K562 (cell line): ENCODE measurements at regions of chr15 and their contacts with region 1.

Region 1: GRCh38 chr15:71730277-71731144 is 79.8 kb upstream of the NR2E3 start:
- DNase-seq: peak; percentile 55 to 63 (median 60)
- ATAC-seq: peak; percentile 96
- H3K4me3 ChIP-seq: no peak overlapping the region
- H3K27ac ChIP-seq: no peak overlapping the region
- H3K4me1 ChIP-seq: no peaks in the 10 kb centered on the region
- H3K27me3 ChIP-seq: no peaks in the 10 kb centered on the region
- CTCF ChIP-seq: peak; percentile 62 to 78 (median 78)
- EP300 ChIP-seq: no peak
- POLR2A ChIP-seq: no peak
- RAD21 ChIP-seq: peak; percentile 59 to 63

Region 2: GRCh38 chr15:70974004-70974832 is 756.3 kb before region 1 on chr15:
- CTCF ChIA-PET with region 1: no interaction called
- POLR2A ChIA-PET with region 1: no interaction called
- in situ Hi-C with region 1: loop called (anchors 25 kb)
- intact Hi-C with region 1: no loop called
- DNase-seq: peak in 1 of 4 experiments; percentile 14
- ATAC-seq: no peak
- H3K4me3 ChIP-seq: no peak overlapping the region
- H3K27ac ChIP-seq: no peak overlapping the region
- H3K4me1 ChIP-seq: no peaks in the 10 kb centered on the region
- H3K27me3 ChIP-seq: no peaks in the 10 kb centered on the region
- CTCF ChIP-seq: peak in 1 of 3 experiments; percentile 36; a peak in 2 of 6 replicates
- EP300 ChIP-seq: no peak
- POLR2A ChIP-seq: no peak
- RAD21 ChIP-seq: peak; percentile 26 to 50; a peak in 3 of 4 replicates

Region 3: DNA sequence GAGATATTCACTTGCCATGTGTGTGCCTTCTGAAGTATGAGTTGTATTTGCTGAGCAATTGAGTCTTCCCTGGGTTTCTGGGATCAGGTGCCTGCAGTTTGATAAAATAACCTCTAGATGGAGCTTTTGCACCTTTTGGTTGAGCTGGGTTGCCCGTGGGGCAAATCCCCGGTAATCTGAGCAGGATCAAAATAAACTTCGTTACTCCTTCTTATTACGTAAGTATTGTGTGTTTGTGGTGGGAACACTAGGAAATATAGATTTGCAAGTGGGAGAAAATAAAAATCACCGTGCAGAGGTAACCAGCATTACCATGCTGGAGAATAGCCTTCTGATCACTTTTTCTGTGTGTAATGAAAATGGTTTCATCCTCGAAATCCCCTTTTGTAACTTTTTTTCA is 197.5 kb before region 1 on chr15:
- CTCF ChIA-PET with region 1: interaction called, 4 read pairs
- POLR2A ChIA-PET with region 1: no interaction called
- in situ Hi-C with region 1: no loop called
- intact Hi-C with region 1: loop called (anchors 1 kb)
- DNase-seq: peak; percentile 25 to 66 (median 56)
- ATAC-seq: peak; percentile 67
- H3K4me3 ChIP-seq: no peak overlapping the region
- H3K27ac ChIP-seq: no peak overlapping the region
- H3K4me1 ChIP-seq: no peaks in the 10 kb centered on the region
- H3K27me3 ChIP-seq: 0 out of 5 replicates have a peak, but pooled peaks cover 0 to 4% of the 10 kb centered on the region in 2 experiments
- CTCF ChIP-seq: peak; percentile 62 to 69 (median 67)
- EP300 ChIP-seq: no peak
- POLR2A ChIP-seq: no peak
- RAD21 ChIP-seq: peak; percentile 31 to 54; a peak in 3 of 4 replicates